ENCODE measurements at regions of chr9 and their contacts with region 1.

Region 1: DNA sequence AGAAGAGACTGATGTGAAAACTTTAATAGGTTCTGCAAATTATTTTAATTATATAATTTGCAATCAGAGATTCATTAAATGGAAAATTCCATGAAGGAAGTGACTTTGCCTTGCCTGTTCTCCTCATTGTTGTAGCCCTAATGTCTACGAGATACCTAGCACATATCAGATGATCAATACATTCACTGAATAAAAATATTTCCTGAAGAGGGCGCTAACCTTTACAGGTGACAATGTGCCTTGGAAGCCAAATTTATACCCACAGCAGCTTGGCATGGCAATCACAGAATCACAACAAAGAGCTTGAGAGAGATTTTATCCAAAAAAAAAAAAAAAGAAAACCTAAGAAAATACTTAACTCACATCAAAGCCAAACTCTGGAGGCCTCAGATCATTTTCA is 17.4 kb downstream of the HAUS6 start:
- DNase-seq: peak in 3 of 35 experiments; percentile 7 to 67 (median 7)
- ATAC-seq: peak in 2 of 4 experiments; percentile 62 to 75
- H3K4me3 ChIP-seq: no peak overlapping the region
- H3K4me3 Mint-ChIP-seq: no peak overlapping the region
- H3K27ac ChIP-seq: no peak overlapping the region
- H3K27ac Mint-ChIP-seq: no peak overlapping the region
- H3K4me1 ChIP-seq: no peaks in the 10 kb centered on the region
- H3K4me1 Mint-ChIP-seq: peaks cover 0 to 5% (median 2%) of the 10 kb centered on the region in 3 donors
- H3K27me3 ChIP-seq: no peaks in the 10 kb centered on the region
- H3K27me3 Mint-ChIP-seq: no peaks in the 10 kb centered on the region

Region 2: DNA sequence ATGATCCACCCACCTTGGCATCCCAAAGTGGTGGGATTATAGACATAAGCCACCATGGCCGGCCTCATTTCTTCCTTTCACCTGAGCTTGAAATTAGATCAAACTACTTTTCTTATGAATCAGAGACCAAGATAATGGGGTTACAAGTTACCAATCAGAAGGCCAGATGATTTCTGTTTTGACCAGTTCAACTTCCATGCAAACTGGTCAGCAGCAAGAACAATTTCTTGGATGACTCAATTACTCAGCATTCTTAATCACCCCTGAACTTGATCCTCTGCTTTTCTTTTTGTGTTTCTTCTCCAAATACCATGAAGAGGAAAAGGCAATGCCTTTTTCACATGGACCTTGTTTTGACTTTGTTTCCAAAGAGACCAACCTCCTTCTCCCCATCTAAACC is 52.0 kb after region 1 on chr9:
- CTCF ChIA-PET with region 1: interaction called, 3 to 11 read pairs
- POLR2A ChIA-PET with region 1: no interaction called
- DNase-seq: no peak
- ATAC-seq: no peak
- H3K4me3 ChIP-seq: no peak overlapping the region
- H3K4me3 Mint-ChIP-seq: no peak overlapping the region
- H3K27ac ChIP-seq: no peak overlapping the region
- H3K27ac Mint-ChIP-seq: no peak overlapping the region
- H3K4me1 ChIP-seq: no peaks in the 10 kb centered on the region
- H3K4me1 Mint-ChIP-seq: peaks cover 0 to 6% (median 5%) of the 10 kb centered on the region in 3 donors
- H3K27me3 ChIP-seq: peaks cover 0 to 3% of the 10 kb centered on the region in 2 experiments
- H3K27me3 Mint-ChIP-seq: peaks cover 0 to 2% of the 10 kb centered on the region in 2 donors

Region 3: GRCh38 chr9:19174127-19174912 is 89.0 kb after region 1 on chr9:
- CTCF ChIA-PET with region 1: interaction called, 18 to 41 read pairs
- POLR2A ChIA-PET with region 1: no interaction called
- DNase-seq: peak in 18 of 35 experiments; percentile 4 to 63 (median 13)
- ATAC-seq: peak in 3 of 4 experiments; percentile 61 to 77 (median 63)
- H3K4me3 ChIP-seq: no peak overlapping the region
- H3K4me3 Mint-ChIP-seq: no peak overlapping the region
- H3K27ac ChIP-seq: no peak overlapping the region
- H3K27ac Mint-ChIP-seq: no peak overlapping the region
- H3K4me1 ChIP-seq: peaks cover 15 to 20% of the 10 kb centered on the region in 2 experiments
- H3K4me1 Mint-ChIP-seq: peaks cover 27 to 38% (median 33%) of the 10 kb centered on the region in 3 donors
- H3K27me3 ChIP-seq: no peaks in the 10 kb centered on the region
- H3K27me3 Mint-ChIP-seq: no peaks in the 10 kb centered on the region

Region 4: GRCh38 chr9:19512103-19512832 is 427.0 kb after region 1 on chr9:
- CTCF ChIA-PET with region 1: interaction called in 1 of 2 experiments, 10 read pairs
- POLR2A ChIA-PET with region 1: no interaction called
- DNase-seq: no peak
- ATAC-seq: no peak
- H3K4me3 ChIP-seq: no peak overlapping the region
- H3K4me3 Mint-ChIP-seq: no peak overlapping the region
- H3K27ac ChIP-seq: no peak overlapping the region
- H3K27ac Mint-ChIP-seq: no peak overlapping the region
- H3K4me1 ChIP-seq: peaks cover 0 to 3% of the 10 kb centered on the region in 2 experiments
- H3K4me1 Mint-ChIP-seq: peaks cover 0 to 5% (median 0%) of the 10 kb centered on the region in 3 donors
- H3K27me3 ChIP-seq: peaks cover 0 to 9% of the 10 kb centered on the region in 2 experiments
- H3K27me3 Mint-ChIP-seq: peaks cover 8 to 9% of the 10 kb centered on the region in 2 donors

Region 5: GRCh38 chr9:20407012-20407411 is 1321.7 kb after region 1 on chr9:
- CTCF ChIA-PET with region 1: no interaction called
- POLR2A ChIA-PET with region 1: no interaction called
- DNase-seq: no peak
- ATAC-seq: no peak
- H3K4me3 ChIP-seq: no peak overlapping the region
- H3K4me3 Mint-ChIP-seq: no peak overlapping the region
- H3K27ac ChIP-seq: no peak overlapping the region
- H3K27ac Mint-ChIP-seq: no peak overlapping the region
- H3K4me1 ChIP-seq: peaks cover 12 to 24% of the 10 kb centered on the region in 2 experiments
- H3K4me1 Mint-ChIP-seq: peaks cover 75 to 85% (median 76%) of the 10 kb centered on the region in 3 donors
- H3K27me3 ChIP-seq: no peaks in the 10 kb centered on the region
- H3K27me3 Mint-ChIP-seq: no peaks in the 10 kb centered on the region